ENCODE measurements at regions of chr13 and their contacts with region 1.

Region 1: DNA sequence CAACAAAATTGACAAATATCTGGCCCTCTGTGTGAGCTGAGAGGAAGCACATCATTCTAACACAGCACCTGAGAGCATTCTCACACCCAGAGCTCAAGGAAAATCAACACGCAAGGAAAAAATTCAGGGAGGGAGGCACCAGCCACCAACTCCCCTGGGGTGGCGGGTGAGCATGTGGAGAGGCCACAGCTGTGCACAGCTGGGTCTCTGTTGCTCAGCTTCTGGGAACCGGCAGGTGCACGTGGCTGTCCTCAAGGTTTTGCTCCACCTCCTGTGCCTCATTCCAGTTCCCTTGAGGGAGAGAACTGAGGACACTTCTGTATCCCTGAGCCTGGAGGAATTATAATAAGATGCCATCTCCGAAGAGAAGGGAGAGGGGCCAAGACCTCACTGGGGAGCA is 134.0 kb downstream of the USP12 start:
- DNase-seq: no peak
- H3K4me3 ChIP-seq: no peak overlapping the region
- H3K27ac ChIP-seq: no peak overlapping the region
- H3K4me1 ChIP-seq: no peaks in the 10 kb centered on the region
- H3K27me3 ChIP-seq: no peaks in the 10 kb centered on the region
- CTCF ChIP-seq: no peak

Region 2: DNA sequence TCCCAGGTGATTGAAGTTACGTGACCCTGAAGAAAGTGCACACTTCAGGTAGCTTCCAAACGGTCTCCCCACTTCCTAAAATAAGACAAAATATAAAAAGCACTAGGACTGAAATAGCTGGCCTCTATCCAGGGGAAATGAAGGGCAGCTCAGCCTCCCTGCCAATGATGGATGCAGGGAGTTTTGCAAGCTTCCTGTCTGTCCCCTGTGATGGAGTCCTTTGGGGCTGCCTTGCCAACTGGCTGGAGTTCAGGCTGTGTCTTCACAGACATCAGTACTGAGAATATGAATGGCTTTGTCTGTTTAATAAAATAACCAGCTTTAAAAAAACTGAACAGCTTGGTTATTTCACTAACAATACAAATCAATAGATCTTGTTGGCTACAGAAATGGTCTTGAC is 175.6 kb before region 1 on chr13:
- CTCF ChIA-PET with region 1: no interaction called
- POLR2A ChIA-PET with region 1: no interaction called
- intact Hi-C with region 1: no loop called
- DNase-seq: no peak
- H3K4me3 ChIP-seq: no peak overlapping the region
- H3K27ac ChIP-seq: no peak overlapping the region
- H3K4me1 ChIP-seq: no peaks in the 10 kb centered on the region
- H3K27me3 ChIP-seq: peaks cover 9% of the 10 kb centered on the region
- CTCF ChIP-seq: no peak

Region 3: DNA sequence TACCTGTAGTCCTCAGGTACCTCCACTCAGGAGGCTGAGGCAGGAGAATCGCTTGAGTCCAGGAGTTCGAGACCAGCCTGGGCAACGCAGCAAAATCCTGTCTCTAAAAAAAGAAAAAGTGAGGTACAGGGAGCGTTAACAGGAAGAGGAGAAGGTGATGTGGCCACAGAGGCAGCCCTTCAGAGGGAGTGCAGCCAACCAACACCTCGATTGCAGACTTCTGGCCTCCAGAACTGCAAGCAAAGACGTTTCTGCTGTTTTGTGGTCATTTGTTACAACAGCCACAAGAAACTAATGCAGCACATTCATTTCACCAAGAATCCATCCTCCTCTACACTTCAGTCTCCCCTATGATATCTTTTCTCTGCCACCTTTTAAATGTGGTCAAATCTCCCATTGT is 11.2 kb before region 1 on chr13:
- CTCF ChIA-PET with region 1: no interaction called
- POLR2A ChIA-PET with region 1: no interaction called
- intact Hi-C with region 1: loop called (anchors 1 kb)
- DNase-seq: no peak
- H3K4me3 ChIP-seq: no peak overlapping the region
- H3K27ac ChIP-seq: no peak overlapping the region
- H3K4me1 ChIP-seq: no peaks in the 10 kb centered on the region
- H3K27me3 ChIP-seq: peaks cover 9% of the 10 kb centered on the region
- CTCF ChIP-seq: no peak

Region 4: GRCh38 chr13:27203854-27204253 is 166.3 kb after region 1 on chr13:
- CTCF ChIA-PET with region 1: no interaction called
- POLR2A ChIA-PET with region 1: no interaction called
- intact Hi-C with region 1: no loop called
- DNase-seq: no peak
- H3K4me3 ChIP-seq: no peak overlapping the region
- H3K27ac ChIP-seq: no peak overlapping the region
- H3K4me1 ChIP-seq: peaks cover 4% of the 10 kb centered on the region
- H3K27me3 ChIP-seq: peaks cover 6% of the 10 kb centered on the region
- CTCF ChIP-seq: peak; percentile 23; the same call in 1 of the 2 replicates